Mammary epithelial cell (primary cell): ENCODE measurements at regions of chr4 and their contacts with region 1.

Region 1: DNA sequence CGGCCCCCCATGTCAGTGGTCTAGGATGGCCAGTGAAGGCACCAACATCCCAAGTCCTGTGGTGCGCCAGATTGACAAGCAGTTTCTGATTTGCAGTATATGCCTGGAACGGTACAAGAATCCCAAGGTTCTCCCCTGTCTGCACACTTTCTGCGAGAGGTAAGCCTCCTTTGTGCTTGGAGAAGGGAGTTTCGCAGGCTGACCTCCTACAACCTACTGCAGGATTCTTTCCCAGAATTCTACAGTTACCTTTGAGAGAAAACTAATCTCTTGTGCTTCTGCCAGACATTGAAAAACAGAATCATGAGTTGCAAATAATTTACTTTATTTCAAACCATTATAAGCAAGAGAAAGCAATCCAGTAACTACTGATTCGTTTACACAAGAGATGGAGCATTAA is 66.1 kb downstream of the TRIM2 start:
- DNase-seq: no peak
- H3K4me3 ChIP-seq: no peak overlapping the region
- H3K27ac ChIP-seq: no peak overlapping the region
- H3K4me1 ChIP-seq: peaks cover 4% of the 10 kb centered on the region
- H3K27me3 ChIP-seq: no peaks in the 10 kb centered on the region
- CTCF ChIP-seq: no peak

Region 2: DNA sequence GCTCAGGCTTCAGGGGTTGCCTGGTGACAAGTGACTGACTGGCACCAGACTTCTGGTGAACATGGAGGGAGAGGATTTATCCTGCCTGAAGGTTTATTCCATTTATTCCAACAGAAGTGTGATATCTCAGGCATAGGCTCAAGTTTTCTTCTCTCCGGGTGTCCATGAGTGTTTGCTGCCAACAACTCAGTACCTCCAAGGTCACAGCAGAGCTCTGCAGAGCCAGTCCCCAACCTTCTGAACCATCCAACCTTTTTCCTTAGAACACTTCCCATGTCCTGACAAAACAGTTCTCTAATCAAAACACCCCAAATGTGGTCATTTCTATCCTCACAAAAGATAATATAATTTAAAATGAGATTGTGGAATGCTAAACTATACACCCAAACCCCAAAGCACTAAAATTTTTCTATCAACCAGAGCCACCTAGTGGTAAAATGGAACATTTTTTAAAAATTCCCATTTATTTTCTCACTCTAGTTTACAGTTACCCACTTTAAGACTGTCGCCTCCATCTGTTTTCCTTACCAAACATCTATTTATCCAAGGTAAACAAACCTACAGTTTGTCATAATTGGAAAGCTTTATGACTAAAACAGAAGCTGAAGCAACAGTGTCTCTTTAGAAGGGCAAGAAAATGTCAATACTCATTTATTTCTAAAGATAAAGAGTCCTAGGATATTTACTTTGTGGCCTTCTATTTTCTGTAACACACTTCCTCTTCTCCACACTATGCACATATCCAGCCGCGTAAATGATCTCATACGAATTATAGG is 630.1 kb before region 1 on chr4:
- CTCF ChIA-PET with region 1: no interaction called
- dilution Hi-C with region 1: no loop called
- in situ Hi-C with region 1: no loop called
- intact Hi-C with region 1: no loop called
- DNase-seq: no peak
- H3K4me3 ChIP-seq: no peak overlapping the region
- H3K27ac ChIP-seq: no peak overlapping the region
- H3K4me1 ChIP-seq: peaks cover 2% of the 10 kb centered on the region
- H3K27me3 ChIP-seq: no peaks in the 10 kb centered on the region
- CTCF ChIP-seq: peak; percentile 41 to 56

Region 3: DNA sequence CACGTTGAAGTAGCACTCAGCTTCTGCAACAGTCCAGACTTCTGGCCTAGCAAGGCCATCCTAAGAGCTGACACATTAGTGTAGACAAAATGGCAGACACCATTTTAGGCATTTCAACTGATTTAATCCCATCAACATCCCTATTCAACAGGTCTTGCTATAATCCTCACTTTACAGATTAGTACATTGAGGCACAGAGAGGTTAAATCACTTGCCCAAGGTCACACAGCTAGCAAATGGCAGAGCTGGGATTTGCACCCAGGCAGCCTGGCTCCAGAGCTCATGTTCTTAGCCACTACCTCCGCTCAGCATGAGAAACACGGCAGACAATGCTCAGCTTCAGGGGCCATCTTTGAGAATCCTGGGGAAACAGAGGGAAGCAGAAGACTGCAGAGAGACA is 174.0 kb before region 1 on chr4:
- CTCF ChIA-PET with region 1: interaction called, 13 read pairs
- dilution Hi-C with region 1: no loop called
- in situ Hi-C with region 1: no loop called
- intact Hi-C with region 1: no loop called
- DNase-seq: no peak
- H3K4me3 ChIP-seq: no peak overlapping the region
- H3K27ac ChIP-seq: no peak overlapping the region
- H3K4me1 ChIP-seq: no peaks in the 10 kb centered on the region
- H3K27me3 ChIP-seq: no peaks in the 10 kb centered on the region
- CTCF ChIP-seq: no peak